ENCODE measurements at regions of chr16 and their contacts with region 1.

Region 1: DNA sequence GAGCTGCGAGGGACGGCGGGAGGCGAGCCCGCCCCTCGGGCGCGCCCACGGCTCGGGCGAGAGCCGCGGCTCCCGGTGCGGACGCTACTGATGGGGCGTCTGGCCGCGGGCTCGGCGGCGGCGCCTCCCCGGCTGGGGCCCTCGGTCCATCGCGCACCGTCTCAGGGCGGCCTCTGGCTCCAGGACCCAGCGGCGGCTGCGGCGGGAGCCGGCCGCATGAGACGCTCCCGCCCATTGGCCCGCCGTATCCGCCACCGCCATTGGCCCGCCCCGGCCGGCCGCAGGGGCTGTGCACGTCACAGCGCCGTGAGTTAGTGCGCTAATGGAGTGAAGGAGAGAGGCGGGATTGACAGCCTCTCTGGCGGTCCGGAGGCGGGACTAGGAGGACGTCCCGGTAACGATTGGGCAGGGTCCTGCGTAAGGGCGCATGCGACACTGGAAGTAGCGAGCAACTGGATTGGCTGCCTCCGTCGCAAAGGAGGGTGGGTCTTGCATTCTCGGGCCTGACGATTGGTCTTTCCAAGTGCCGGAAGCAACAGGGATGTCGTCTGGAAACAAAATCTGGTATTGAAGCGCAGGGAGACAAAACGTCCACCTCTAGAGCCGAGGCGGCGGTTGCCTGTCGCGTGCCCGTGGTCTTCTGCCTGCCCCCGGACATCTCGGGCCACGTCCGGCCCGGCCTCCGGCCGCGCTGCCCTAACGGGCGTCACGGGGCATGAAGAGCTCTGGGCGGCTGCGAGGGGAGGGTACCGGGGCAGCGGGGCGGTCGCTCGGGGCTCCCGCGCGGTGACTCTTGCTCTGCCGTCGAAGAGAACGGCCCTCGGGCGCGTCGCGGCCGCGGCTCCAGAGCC is at the start of gene ANKRD11:
- DNase-seq: peak; percentile 99 to 100 (median 99)
- ATAC-seq: peak; percentile 92
- H3K4me3 ChIP-seq: peak within 1 kb of the TSS; percentile 97
- H3K27ac ChIP-seq: peak within 1 kb of the TSS; percentile 91
- H3K4me1 ChIP-seq: peaks cover 34 to 44% of the 10 kb centered on the region in 2 experiments
- H3K27me3 ChIP-seq: no peaks in the 10 kb centered on the region
- CTCF ChIP-seq: peak in 1 of 3 experiments; percentile 5; a peak in 1 of 6 replicates
- EP300 ChIP-seq: no peak
- POLR2A ChIP-seq: peak; percentile 78
- RAD21 ChIP-seq: no peak
- polyA plus RNA-seq, gene ANKRD11: 4.7 to 5.4 TPM

Region 2: GRCh38 chr16:87850009-87851006 is 1640.3 kb before region 1 on chr16:
- CTCF ChIA-PET with region 1: no interaction called
- POLR2A ChIA-PET with region 1: no interaction called
- in situ Hi-C with region 1: no loop called
- intact Hi-C with region 1: no loop called
- DNase-seq: peak; percentile 72 to 76 (median 74)
- ATAC-seq: peak; percentile 28
- H3K4me3 ChIP-seq: no peak overlapping the region
- H3K27ac ChIP-seq: no peak overlapping the region; the same call in 2 of the 3 replicates
- H3K4me1 ChIP-seq: peaks cover 27 to 85% of the 10 kb centered on the region in 2 experiments
- H3K27me3 ChIP-seq: no peaks in the 10 kb centered on the region
- CTCF ChIP-seq: peak; percentile 77 to 90 (median 81)
- EP300 ChIP-seq: no peak
- POLR2A ChIP-seq: no peak
- RAD21 ChIP-seq: peak; percentile 65 to 79

Region 3: DNA sequence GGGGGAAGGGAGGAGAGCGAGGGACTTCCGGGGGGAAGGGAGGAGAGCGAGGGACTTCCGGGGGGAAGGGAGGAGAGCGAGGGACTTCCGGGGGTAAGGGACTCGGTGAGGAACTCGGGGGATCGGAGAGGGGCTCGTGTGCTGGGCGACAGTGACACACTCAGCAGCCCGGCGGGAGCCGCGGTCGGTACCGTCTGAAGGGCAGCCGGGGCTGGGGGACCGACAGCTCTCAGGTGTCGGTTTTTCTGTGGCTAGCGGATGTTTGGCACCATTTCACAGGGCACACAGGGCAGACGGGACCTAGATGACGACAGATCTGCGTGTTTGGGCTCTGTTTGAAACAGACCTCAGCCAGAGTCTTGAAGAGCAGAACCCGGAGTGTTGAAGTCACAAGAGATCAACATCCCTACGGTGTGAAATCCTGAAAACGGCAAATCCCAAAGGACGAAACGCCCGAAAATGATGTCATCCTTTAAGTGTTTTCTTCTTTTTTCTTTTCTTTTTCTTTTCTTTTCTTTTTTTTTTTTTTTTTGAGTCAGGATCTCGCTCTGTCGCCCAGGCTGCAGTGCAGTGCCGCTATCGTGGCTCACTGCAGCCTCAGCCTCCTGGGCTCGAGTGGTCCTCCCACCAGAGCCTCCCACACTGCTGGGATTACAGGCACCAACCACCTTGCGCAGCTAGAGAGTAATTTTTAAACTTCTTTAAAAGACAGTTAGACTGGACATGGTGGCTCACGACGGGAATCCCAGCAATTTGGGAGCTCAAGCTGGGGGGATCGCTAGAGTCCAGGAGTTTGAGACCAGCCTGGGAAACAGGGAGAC is 249.2 kb before region 1 on chr16:
- CTCF ChIA-PET with region 1: no interaction called
- POLR2A ChIA-PET with region 1: no interaction called
- in situ Hi-C with region 1: no loop called
- intact Hi-C with region 1: loop called (anchors 2 kb)
- DNase-seq: peak; percentile 77 to 86 (median 82)
- ATAC-seq: peak; percentile 90
- H3K4me3 ChIP-seq: peak overlapping the region; percentile 67
- H3K27ac ChIP-seq: peak overlapping the region; percentile 96
- H3K4me1 ChIP-seq: peaks cover 0 to 28% of the 10 kb centered on the region in 2 experiments; a peak in 2 of 5 replicates
- H3K27me3 ChIP-seq: no peaks in the 10 kb centered on the region
- CTCF ChIP-seq: no peak
- EP300 ChIP-seq: no peak
- POLR2A ChIP-seq: peak; percentile 98
- RAD21 ChIP-seq: peak in 1 of 2 experiments; percentile 3; a peak in 1 of 4 replicates

Region 4: GRCh38 chr16:89330177-89330856 is 160.3 kb before region 1 on chr16:
- CTCF ChIA-PET with region 1: no interaction called
- POLR2A ChIA-PET with region 1: no interaction called
- in situ Hi-C with region 1: no loop called
- intact Hi-C with region 1: loop called (anchors 5 kb)
- DNase-seq: peak in 3 of 4 experiments; percentile 39 to 51 (median 48)
- ATAC-seq: no peak
- H3K4me3 ChIP-seq: no peak overlapping the region
- H3K27ac ChIP-seq: peak overlapping the region; percentile 57; the same call in 2 of the 3 replicates
- H3K4me1 ChIP-seq: peaks cover 40 to 69% of the 10 kb centered on the region in 2 experiments
- H3K27me3 ChIP-seq: no peaks in the 10 kb centered on the region
- CTCF ChIP-seq: no peak
- EP300 ChIP-seq: no peak
- POLR2A ChIP-seq: no peak
- RAD21 ChIP-seq: no peak

Region 5: GRCh38 chr16:89476804-89477261 is 13.8 kb before region 1 on chr16:
- CTCF ChIA-PET with region 1: interaction called, 7 read pairs
- POLR2A ChIA-PET with region 1: interaction called, 10 read pairs
- in situ Hi-C with region 1: no loop called
- intact Hi-C with region 1: no loop called
- DNase-seq: no peak
- ATAC-seq: no peak; the same call in 2 of the 3 replicates
- H3K4me3 ChIP-seq: no peak overlapping the region
- H3K27ac ChIP-seq: peak overlapping the region; percentile 4; the same call in 1 of the 3 replicates
- H3K4me1 ChIP-seq: peaks cover 29 to 57% of the 10 kb centered on the region in 2 experiments
- H3K27me3 ChIP-seq: no peaks in the 10 kb centered on the region
- CTCF ChIP-seq: no peak
- EP300 ChIP-seq: no peak
- POLR2A ChIP-seq: no peak
- RAD21 ChIP-seq: no peak

Region 6: DNA sequence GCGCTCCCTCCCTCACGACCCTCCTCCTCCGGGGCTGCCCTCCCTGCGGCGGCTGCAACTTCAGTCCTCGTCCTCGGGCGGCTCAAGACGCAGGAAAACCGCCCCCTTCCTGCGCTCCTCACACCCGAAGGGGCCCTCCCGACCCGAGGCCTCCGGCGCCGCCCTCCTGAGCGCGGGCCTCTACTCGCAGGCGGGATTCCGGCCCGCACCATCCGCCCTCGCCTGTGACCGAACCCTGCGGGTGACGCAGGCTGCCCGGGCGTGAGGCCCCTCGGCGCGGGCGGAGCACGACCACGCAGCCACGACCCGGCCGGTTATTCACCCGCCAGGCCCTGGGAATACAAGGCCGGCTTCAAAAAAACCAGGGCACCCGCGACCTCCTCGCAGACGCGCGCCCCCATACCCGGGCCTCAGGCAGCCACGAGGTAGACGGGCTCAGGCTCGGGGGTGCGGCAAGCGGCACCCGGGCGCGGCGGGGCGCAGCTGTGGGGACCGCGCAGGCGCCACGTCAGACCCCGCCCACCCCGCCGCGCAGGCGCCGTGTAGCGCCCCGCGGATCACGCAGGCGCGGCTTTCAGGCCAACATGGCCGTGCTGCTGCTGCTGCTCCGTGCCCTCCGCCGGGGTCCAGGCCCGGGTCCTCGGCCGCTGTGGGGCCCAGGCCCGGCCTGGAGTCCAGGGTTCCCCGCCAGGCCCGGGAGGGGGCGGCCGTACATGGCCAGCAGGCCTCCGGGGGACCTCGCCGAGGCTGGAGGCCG is 17.4 kb after region 1 on chr16 and contains the start of gene SPG7:
- CTCF ChIA-PET with region 1: no interaction called
- POLR2A ChIA-PET with region 1: interaction called, 9 read pairs
- in situ Hi-C with region 1: no loop called
- intact Hi-C with region 1: loop called (anchors 1 kb)
- DNase-seq: peak; percentile 93 to 96 (median 94)
- ATAC-seq: peak; percentile 83
- H3K4me3 ChIP-seq: peak within 1 kb of the TSS; percentile 77
- H3K27ac ChIP-seq: peak within 1 kb of the TSS; percentile 90
- H3K4me1 ChIP-seq: peaks cover 29 to 55% of the 10 kb centered on the region in 2 experiments; a peak in 4 of 5 replicates
- H3K27me3 ChIP-seq: no peaks in the 10 kb centered on the region; a peak in 1 of 5 replicates
- CTCF ChIP-seq: no peak
- EP300 ChIP-seq: no peak
- POLR2A ChIP-seq: peak; percentile 86
- RAD21 ChIP-seq: no peak
- polyA plus RNA-seq, gene SPG7: 5.8 to 7.0 TPM

Measured in K562 (cell line).